CD8-positive, alpha-beta T cell (primary cell): ENCODE measurements at regions of chr18 and their contacts with region 1.

Region 1: DNA sequence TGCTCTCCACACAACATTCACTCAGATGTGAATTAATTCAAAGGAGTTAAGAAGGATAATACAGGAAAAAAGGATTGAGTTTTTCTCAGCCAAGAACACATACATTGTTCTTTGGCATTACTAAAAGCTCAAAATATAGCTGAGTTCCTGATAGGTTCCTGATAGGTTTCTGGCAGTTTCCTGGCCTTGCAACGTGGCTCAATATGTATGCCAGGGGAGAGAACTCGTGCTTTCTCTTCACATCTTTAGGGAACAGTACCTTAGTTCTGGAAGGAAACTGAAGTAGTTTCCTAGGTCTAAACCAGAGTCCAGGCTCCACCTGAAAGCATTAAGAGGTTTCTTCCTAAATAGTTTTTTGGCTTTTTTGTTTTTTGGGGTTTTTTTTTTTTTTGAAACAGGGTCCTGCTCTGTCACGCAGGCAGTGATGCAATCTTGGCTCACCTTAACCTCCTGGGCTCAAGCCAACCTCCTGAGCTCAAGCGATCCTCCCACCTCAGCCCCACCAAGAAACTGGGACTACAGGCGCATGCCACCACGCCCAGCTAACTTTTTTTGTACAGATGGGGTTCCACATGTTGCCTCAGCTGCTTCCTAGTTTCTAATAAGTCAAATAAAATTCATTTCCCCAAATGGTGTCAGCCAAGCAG is 42.8 kb downstream of the ESCO1 start:
- DNase-seq: no peak
- ATAC-seq: no peak
- H3K4me3 ChIP-seq: no peak overlapping the region
- H3K4me3 Mint-ChIP-seq: no peak overlapping the region
- H3K27ac ChIP-seq: no peak overlapping the region
- H3K27ac Mint-ChIP-seq: no peak overlapping the region
- H3K4me1 ChIP-seq: no peaks in the 10 kb centered on the region
- H3K4me1 Mint-ChIP-seq: no peaks in the 10 kb centered on the region
- H3K27me3 ChIP-seq: no peaks in the 10 kb centered on the region
- H3K27me3 Mint-ChIP-seq: no peaks in the 10 kb centered on the region
- CTCF ChIP-seq: no peak

Region 2: DNA sequence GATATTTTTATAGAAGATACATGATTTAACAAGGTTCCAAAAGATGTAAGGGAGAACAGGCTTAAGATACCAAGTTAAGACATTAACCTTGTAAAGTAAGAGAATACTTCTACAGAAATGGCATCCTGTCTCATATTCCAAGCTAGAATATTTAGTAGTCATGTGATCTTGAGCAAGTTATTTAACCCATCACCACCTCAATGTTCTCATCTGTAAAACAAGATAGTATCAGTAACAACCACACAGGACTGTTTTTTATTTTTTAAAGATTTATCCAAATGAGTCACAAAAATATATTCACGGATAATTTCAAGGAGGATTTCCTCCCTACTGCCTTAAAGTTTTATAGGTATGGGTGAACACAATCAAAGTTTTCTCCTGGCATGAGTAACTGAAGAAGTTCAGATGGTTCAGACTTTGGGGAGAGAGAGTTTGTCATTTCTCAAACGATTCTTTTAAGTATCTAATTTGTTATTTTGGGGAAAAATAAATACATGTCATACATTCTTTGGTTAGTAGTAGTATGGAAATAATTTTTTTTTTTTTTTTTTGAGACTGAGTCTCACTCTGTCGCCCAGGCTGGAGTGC is 472.1 kb before region 1 on chr18:
- CTCF ChIA-PET with region 1: no interaction called
- POLR2A ChIA-PET with region 1: no interaction called
- intact Hi-C with region 1: no loop called
- DNase-seq: no peak
- ATAC-seq: no peak
- H3K4me3 ChIP-seq: no peak overlapping the region
- H3K4me3 Mint-ChIP-seq: peak overlapping the region; percentile 13
- H3K27ac ChIP-seq: no peak overlapping the region
- H3K27ac Mint-ChIP-seq: no peak overlapping the region
- H3K4me1 ChIP-seq: peaks cover 12% of the 10 kb centered on the region
- H3K4me1 Mint-ChIP-seq: peaks cover 81% of the 10 kb centered on the region
- H3K27me3 ChIP-seq: no peaks in the 10 kb centered on the region
- H3K27me3 Mint-ChIP-seq: no peaks in the 10 kb centered on the region
- CTCF ChIP-seq: no peak

Region 3: DNA sequence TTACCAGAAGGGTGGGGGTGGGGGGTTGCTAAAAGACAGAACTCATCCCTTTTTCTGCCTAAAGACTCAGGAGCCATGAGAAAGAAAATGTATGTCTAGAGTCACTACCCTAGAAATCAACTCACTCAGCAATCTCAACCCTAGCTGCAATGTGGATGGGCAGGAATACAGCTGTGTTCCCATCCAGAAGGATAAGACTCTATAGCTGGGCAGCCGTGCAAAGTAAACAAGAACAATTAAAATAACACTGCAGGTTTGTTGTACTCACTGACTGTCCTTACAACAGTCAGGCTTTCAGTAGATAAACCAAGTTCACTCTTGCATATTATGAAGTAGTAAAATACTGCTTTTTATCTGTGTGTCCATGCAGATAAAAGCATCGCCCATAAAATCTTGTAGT is 31.3 kb before region 1 on chr18:
- CTCF ChIA-PET with region 1: no interaction called
- POLR2A ChIA-PET with region 1: no interaction called
- intact Hi-C with region 1: loop called in 1 of 2 experiments (anchors 5 kb)
- DNase-seq: no peak
- ATAC-seq: no peak
- H3K4me3 ChIP-seq: no peak overlapping the region
- H3K4me3 Mint-ChIP-seq: no peak overlapping the region
- H3K27ac ChIP-seq: no peak overlapping the region
- H3K27ac Mint-ChIP-seq: no peak overlapping the region
- H3K4me1 ChIP-seq: no peaks in the 10 kb centered on the region
- H3K4me1 Mint-ChIP-seq: no peaks in the 10 kb centered on the region
- H3K27me3 ChIP-seq: no peaks in the 10 kb centered on the region
- H3K27me3 Mint-ChIP-seq: no peaks in the 10 kb centered on the region
- CTCF ChIP-seq: no peak

Region 4: GRCh38 chr18:21538230-21538629 is 19.5 kb before region 1 on chr18:
- CTCF ChIA-PET with region 1: no interaction called
- POLR2A ChIA-PET with region 1: no interaction called
- intact Hi-C with region 1: loop called in 1 of 2 experiments (anchors 2 kb)
- DNase-seq: no peak
- ATAC-seq: no peak
- H3K4me3 ChIP-seq: no peak overlapping the region
- H3K4me3 Mint-ChIP-seq: no peak overlapping the region
- H3K27ac ChIP-seq: no peak overlapping the region
- H3K27ac Mint-ChIP-seq: no peak overlapping the region
- H3K4me1 ChIP-seq: no peaks in the 10 kb centered on the region
- H3K4me1 Mint-ChIP-seq: peaks cover 4% of the 10 kb centered on the region
- H3K27me3 ChIP-seq: no peaks in the 10 kb centered on the region
- H3K27me3 Mint-ChIP-seq: no peaks in the 10 kb centered on the region
- CTCF ChIP-seq: no peak

Region 5: DNA sequence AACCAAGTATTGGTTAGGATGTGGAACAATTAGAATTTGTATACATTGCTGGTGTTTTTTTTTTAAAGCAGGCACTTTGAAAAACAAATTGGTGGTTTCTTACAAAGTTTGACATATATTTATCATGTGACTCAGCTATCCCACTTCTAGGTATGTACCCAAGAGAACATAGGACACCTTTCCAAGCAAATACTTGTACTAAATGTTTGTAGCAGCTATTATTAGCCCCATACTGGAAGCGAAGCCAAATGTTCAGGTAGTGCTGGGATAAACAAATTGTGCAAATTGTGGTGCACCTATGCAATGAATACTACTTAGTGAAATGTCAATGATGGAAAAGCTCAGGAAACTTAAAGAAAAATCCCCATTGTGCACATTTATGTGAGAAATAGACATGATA is 283.8 kb after region 1 on chr18:
- CTCF ChIA-PET with region 1: interaction called, 3 read pairs
- POLR2A ChIA-PET with region 1: no interaction called
- intact Hi-C with region 1: loop called in 1 of 2 experiments (anchors 10 kb)
- DNase-seq: no peak
- ATAC-seq: no peak
- H3K4me3 ChIP-seq: no peak overlapping the region
- H3K4me3 Mint-ChIP-seq: no peak overlapping the region
- H3K27ac ChIP-seq: no peak overlapping the region
- H3K27ac Mint-ChIP-seq: no peak overlapping the region
- H3K4me1 ChIP-seq: no peaks in the 10 kb centered on the region
- H3K4me1 Mint-ChIP-seq: no peaks in the 10 kb centered on the region
- H3K27me3 ChIP-seq: no peaks in the 10 kb centered on the region
- H3K27me3 Mint-ChIP-seq: no peaks in the 10 kb centered on the region
- CTCF ChIP-seq: no peak

Region 6: GRCh38 chr18:22465859-22466457 is 908.2 kb after region 1 on chr18:
- CTCF ChIA-PET with region 1: no interaction called
- POLR2A ChIA-PET with region 1: no interaction called
- intact Hi-C with region 1: no loop called
- DNase-seq: peak in 8 of 9 experiments; percentile 7 to 83 (median 35)
- ATAC-seq: peak; percentile 95
- H3K4me3 ChIP-seq: no peak overlapping the region
- H3K4me3 Mint-ChIP-seq: no peak overlapping the region
- H3K27ac ChIP-seq: peak overlapping the region in 1 of 2 experiments; percentile 35
- H3K27ac Mint-ChIP-seq: no peak overlapping the region
- H3K4me1 ChIP-seq: peaks cover 3% of the 10 kb centered on the region
- H3K4me1 Mint-ChIP-seq: peaks cover 4% of the 10 kb centered on the region
- H3K27me3 ChIP-seq: no peaks in the 10 kb centered on the region
- H3K27me3 Mint-ChIP-seq: no peaks in the 10 kb centered on the region
- CTCF ChIP-seq: no peak